Activated B cell treated with CpG ODN at 0.5 μM for 24 hours (primary cell): ENCODE measurements at regions of chr15 and their contacts with region 1.

Region 1: GRCh38 chr15:90954712-90955671 is at the start of gene RCCD1:
- DNase-seq: peak; percentile 83
- ATAC-seq: peak; percentile 94
- H3K4me3 Mint-ChIP-seq: peak within 1 kb of the TSS; percentile 88
- H3K27ac Mint-ChIP-seq: peak within 1 kb of the TSS; percentile 92
- H3K4me1 Mint-ChIP-seq: peaks cover 21% of the 10 kb centered on the region
- H3K27me3 Mint-ChIP-seq: no peaks in the 10 kb centered on the region
- CTCF ChIP-seq: no peak
- total RNA-seq, gene RCCD1: 15.7 and 19.3 TPM in 2 replicates

Region 2: GRCh38 chr15:90716976-90717821 is 237.8 kb before region 1 on chr15 and contains the start of gene BLM:
- CTCF ChIA-PET with region 1: no interaction called
- POLR2A ChIA-PET with region 1: no interaction called
- intact Hi-C with region 1: no loop called
- DNase-seq: peak; percentile 87
- ATAC-seq: peak; percentile 99
- H3K4me3 Mint-ChIP-seq: peak within 1 kb of the TSS; percentile 96
- H3K27ac Mint-ChIP-seq: peak within 1 kb of the TSS; percentile 94
- H3K4me1 Mint-ChIP-seq: peaks cover 30% of the 10 kb centered on the region
- H3K27me3 Mint-ChIP-seq: no peaks in the 10 kb centered on the region
- CTCF ChIP-seq: no peak
- total RNA-seq, gene BLM: 18.2 and 23.4 TPM in 2 replicates

Region 3: GRCh38 chr15:90910441-90911301 is 44.3 kb before region 1 on chr15:
- CTCF ChIA-PET with region 1: no interaction called
- POLR2A ChIA-PET with region 1: no interaction called
- intact Hi-C with region 1: no loop called
- DNase-seq: no peak
- ATAC-seq: no peak
- H3K4me3 Mint-ChIP-seq: no peak overlapping the region
- H3K27ac Mint-ChIP-seq: no peak overlapping the region
- H3K4me1 Mint-ChIP-seq: peaks cover 5% of the 10 kb centered on the region
- H3K27me3 Mint-ChIP-seq: no peaks in the 10 kb centered on the region
- CTCF ChIP-seq: no peak

Region 4: GRCh38 chr15:90994417-90995311 is 39.7 kb after region 1 on chr15 and contains the start of gene PRC1:
- CTCF ChIA-PET with region 1: interaction called, 7 read pairs
- POLR2A ChIA-PET with region 1: interaction called, 4 read pairs
- intact Hi-C with region 1: loop called (anchors 1 kb)
- DNase-seq: peak; percentile 95
- ATAC-seq: peak; percentile 96
- H3K4me3 Mint-ChIP-seq: peak within 1 kb of the TSS; percentile 99
- H3K27ac Mint-ChIP-seq: peak within 1 kb of the TSS; percentile 96
- H3K4me1 Mint-ChIP-seq: peaks cover 23% of the 10 kb centered on the region
- H3K27me3 Mint-ChIP-seq: no peaks in the 10 kb centered on the region
- CTCF ChIP-seq: no peak
- total RNA-seq, gene PRC1: 8.1 and 9.3 TPM in 2 replicates

Region 5: GRCh38 chr15:91032919-91033803 is 78.2 kb after region 1 on chr15:
- CTCF ChIA-PET with region 1: interaction called, 39 read pairs
- POLR2A ChIA-PET with region 1: interaction called, 3 read pairs
- intact Hi-C with region 1: loop called (anchors 1 kb)
- DNase-seq: peak; percentile 36
- ATAC-seq: peak; percentile 62
- H3K4me3 Mint-ChIP-seq: no peak overlapping the region
- H3K27ac Mint-ChIP-seq: no peak overlapping the region
- H3K4me1 Mint-ChIP-seq: peaks cover 5% of the 10 kb centered on the region
- H3K27me3 Mint-ChIP-seq: peaks cover 3% of the 10 kb centered on the region
- CTCF ChIP-seq: no peak

Region 6: GRCh38 chr15:91224755-91225380 is 269.9 kb after region 1 on chr15:
- CTCF ChIA-PET with region 1: no interaction called
- POLR2A ChIA-PET with region 1: no interaction called
- intact Hi-C with region 1: loop called (anchors 5 kb)
- DNase-seq: no peak
- ATAC-seq: no peak
- H3K4me3 Mint-ChIP-seq: no peak overlapping the region
- H3K27ac Mint-ChIP-seq: no peak overlapping the region
- H3K4me1 Mint-ChIP-seq: no peaks in the 10 kb centered on the region
- H3K27me3 Mint-ChIP-seq: peaks cover 32% of the 10 kb centered on the region
- CTCF ChIP-seq: no peak

Region 7: DNA sequence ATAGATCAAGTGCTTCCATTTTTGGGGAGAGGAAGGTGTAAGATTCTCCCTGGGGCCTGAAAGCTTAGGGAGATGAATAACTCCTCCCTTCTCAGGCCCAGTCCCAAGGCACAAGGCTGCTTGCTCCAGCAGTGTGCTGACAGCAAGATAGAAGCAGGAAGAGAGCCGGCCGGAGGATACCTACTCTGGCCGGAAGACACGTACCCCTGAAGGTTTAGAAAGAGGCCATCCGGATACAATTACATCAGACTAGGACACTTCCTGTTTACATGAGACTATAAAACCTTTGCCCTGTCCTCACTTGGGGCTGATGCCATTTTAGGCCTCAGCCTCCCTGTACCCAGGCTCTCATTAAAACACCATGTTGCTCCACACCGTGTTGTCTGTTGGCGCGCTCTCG is 475.0 kb after region 1 on chr15:
- CTCF ChIA-PET with region 1: no interaction called
- POLR2A ChIA-PET with region 1: no interaction called
- intact Hi-C with region 1: no loop called
- DNase-seq: no peak
- ATAC-seq: no peak
- H3K4me3 Mint-ChIP-seq: no peak overlapping the region
- H3K27ac Mint-ChIP-seq: no peak overlapping the region
- H3K4me1 Mint-ChIP-seq: no peaks in the 10 kb centered on the region
- H3K27me3 Mint-ChIP-seq: peaks cover 2% of the 10 kb centered on the region
- CTCF ChIP-seq: no peak

Region 8: DNA sequence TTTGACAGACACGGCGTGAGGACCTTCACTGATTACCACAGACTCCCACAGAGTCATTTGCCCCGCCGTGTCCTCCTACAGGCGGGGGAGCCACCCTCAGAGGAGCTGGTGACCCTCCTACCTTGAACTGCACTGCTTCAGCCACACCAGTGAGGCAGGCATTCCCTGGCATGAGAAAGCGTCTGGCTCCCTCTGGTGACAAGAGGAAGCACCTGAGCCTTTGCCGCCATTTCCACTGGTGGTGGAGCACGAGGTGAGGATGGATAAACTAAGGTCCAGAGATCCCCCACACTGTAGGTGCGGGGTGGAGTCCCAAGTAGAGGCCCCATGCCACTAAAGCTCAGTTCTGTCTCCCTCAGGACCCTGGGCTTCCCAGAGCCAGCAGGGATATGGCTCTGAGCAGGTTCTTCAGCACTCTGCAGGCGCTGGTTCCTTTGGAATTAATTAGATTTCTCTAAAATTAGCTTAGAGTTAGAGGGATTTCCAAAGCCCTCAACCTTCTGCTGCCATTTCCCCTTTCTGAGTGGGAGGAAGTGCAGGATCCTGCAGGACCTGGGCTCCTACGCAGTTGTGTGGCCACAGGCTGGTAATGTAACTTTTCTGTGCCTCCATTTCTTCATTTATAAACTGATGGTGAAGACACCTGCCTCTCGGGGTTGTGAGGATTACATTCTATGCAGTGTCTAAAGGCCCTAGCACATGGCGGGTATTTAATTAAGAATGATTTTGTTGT is 1122.5 kb after region 1 on chr15:
- CTCF ChIA-PET with region 1: no interaction called
- POLR2A ChIA-PET with region 1: no interaction called
- intact Hi-C with region 1: loop called (anchors 10 kb)
- DNase-seq: no peak
- ATAC-seq: no peak
- H3K4me3 Mint-ChIP-seq: no peak overlapping the region
- H3K27ac Mint-ChIP-seq: no peak overlapping the region
- H3K4me1 Mint-ChIP-seq: no peaks in the 10 kb centered on the region
- H3K27me3 Mint-ChIP-seq: no peaks in the 10 kb centered on the region
- CTCF ChIP-seq: no peak